Common myeloid progenitor, CD34-positive (primary cell): ENCODE measurements at regions of chr18 and their contacts with region 1.

Region 1: DNA sequence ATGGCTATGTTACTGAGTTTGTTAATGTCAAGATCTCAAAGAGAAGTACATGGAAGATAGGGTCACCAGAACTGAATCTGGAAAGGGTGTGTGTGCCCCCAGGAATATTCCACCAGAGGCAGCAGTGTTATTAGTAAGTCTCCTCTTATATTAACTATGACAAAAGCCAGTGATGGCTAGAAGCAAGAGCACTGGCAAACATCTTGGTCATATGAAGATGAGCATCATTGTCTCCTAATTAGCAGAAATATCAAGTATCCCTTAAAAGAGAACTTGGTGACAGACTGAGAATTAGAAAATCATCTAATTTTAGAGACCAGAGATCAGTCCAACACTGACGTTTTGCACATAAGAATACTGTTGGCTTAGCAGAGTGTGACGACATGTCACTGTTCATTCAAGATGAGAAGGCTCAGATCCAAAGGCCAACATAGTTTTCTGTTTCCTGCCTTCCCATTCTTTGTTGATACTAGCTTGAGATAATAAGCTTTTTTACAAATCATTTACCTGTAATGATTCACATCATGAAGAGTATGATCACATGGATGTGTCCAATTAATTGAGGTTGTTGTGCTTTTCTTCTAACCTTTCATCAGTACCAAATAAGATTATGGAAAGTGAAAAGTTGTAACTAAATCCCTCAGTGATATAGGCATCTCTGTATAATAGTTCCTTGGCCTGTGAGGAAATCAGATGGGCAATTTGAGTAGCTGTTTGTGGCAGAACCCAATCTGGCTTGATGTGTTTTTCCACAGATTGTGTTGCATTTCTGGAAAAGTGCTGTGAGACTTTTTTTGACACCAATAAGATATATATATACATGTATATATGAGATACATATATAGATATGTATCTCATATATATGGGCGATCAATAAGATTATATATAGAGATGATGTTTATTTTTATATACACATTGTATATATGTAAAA is 44.5 kb downstream of the MAPRE2 start:
- DNase-seq: no peak
- H3K4me3 ChIP-seq: no peak overlapping the region
- H3K27ac ChIP-seq: no peak overlapping the region
- H3K4me1 ChIP-seq: peaks cover 0 to 14% (median 4%) of the 10 kb centered on the region in 4 experiments
- H3K27me3 ChIP-seq: no peaks in the 10 kb centered on the region

Region 2: DNA sequence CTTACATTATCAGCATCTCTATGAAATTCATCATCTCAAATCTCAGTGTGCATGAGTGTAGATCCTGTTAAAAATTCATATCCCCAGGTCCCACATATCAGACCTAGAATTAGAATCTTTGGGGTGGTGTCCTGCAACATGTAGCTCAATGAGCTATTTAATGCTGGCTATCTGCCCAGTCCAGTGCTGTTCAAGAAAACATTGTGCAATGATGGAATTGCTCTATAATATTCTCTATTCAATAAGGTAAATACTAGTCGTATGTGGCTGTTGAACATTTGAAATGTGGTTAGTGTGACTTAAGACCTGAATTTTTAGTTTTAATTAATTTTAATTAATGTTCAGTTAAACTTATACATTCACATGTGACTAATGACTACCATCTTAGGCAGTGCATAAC is 988.4 kb before region 1 on chr18:
- CTCF ChIA-PET with region 1: no interaction called
- POLR2A ChIA-PET with region 1: no interaction called
- DNase-seq: no peak
- H3K4me3 ChIP-seq: no peak overlapping the region
- H3K27ac ChIP-seq: no peak overlapping the region
- H3K4me1 ChIP-seq: no peaks in the 10 kb centered on the region
- H3K27me3 ChIP-seq: peaks cover 0 to 2% (median 0%) of the 10 kb centered on the region in 5 experiments

Region 3: GRCh38 chr18:34890486-34891085 is 195.1 kb before region 1 on chr18:
- CTCF ChIA-PET with region 1: no interaction called
- POLR2A ChIA-PET with region 1: no interaction called
- DNase-seq: no peak
- H3K4me3 ChIP-seq: no peak overlapping the region
- H3K27ac ChIP-seq: no peak overlapping the region
- H3K4me1 ChIP-seq: peaks cover 2 to 10% (median 6%) of the 10 kb centered on the region in 4 experiments
- H3K27me3 ChIP-seq: no peaks in the 10 kb centered on the region

Region 4: DNA sequence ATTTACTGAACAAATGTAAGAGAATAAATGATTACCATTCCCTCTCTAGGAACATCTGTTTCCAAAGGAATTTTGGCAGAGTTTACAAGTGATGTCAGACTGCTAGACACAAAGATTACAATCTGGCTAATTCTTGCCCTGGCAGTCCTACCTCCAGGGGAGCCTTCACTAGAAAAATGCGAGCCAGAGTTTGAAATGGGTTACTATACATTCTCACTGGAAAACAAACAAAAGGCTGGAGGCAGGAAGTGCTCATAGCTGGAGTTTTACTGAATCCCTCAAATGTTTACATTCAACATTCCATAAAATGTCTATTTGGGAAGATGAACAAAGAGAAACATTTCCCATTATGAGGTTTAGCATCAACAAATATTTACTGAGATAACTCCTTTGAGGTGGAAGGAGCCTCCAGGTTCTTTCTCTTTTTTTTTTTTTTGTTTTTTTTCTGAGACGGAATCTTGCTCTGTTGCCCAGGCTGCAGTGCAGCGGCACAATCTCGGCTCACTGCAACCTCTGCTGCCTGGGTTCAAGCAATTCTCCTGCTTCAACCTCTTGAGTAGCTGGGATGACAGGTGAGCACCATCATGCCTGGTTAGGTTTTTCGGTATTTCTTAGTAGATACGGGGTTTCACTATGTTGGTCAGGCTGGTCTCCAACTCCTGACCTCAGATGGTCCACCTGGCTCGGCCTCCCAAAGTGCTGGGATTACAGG is 173.5 kb before region 1 on chr18:
- CTCF ChIA-PET with region 1: no interaction called
- POLR2A ChIA-PET with region 1: no interaction called
- DNase-seq: no peak
- H3K4me3 ChIP-seq: no peak overlapping the region
- H3K27ac ChIP-seq: no peak overlapping the region
- H3K4me1 ChIP-seq: no peaks in the 10 kb centered on the region
- H3K27me3 ChIP-seq: no peaks in the 10 kb centered on the region

Region 5: GRCh38 chr18:35071819-35072247 is 13.9 kb before region 1 on chr18:
- CTCF ChIA-PET with region 1: interaction called, 10 read pairs
- POLR2A ChIA-PET with region 1: interaction called, 3 read pairs
- DNase-seq: no peak
- H3K4me3 ChIP-seq: no peak overlapping the region
- H3K27ac ChIP-seq: peak overlapping the region in 1 of 2 experiments; percentile 44
- H3K4me1 ChIP-seq: peaks cover 8 to 34% (median 20%) of the 10 kb centered on the region in 4 experiments
- H3K27me3 ChIP-seq: no peaks in the 10 kb centered on the region

Region 6: GRCh38 chr18:35095983-35096676 is 10.4 kb after region 1 on chr18:
- CTCF ChIA-PET with region 1: interaction called, 10 read pairs
- POLR2A ChIA-PET with region 1: no interaction called
- DNase-seq: peak in 2 of 3 donors; percentile 35 to 39
- H3K4me3 ChIP-seq: no peak overlapping the region
- H3K27ac ChIP-seq: peak overlapping the region in 1 of 2 experiments; percentile 3
- H3K4me1 ChIP-seq: no peaks in the 10 kb centered on the region
- H3K27me3 ChIP-seq: no peaks in the 10 kb centered on the region

Region 7: DNA sequence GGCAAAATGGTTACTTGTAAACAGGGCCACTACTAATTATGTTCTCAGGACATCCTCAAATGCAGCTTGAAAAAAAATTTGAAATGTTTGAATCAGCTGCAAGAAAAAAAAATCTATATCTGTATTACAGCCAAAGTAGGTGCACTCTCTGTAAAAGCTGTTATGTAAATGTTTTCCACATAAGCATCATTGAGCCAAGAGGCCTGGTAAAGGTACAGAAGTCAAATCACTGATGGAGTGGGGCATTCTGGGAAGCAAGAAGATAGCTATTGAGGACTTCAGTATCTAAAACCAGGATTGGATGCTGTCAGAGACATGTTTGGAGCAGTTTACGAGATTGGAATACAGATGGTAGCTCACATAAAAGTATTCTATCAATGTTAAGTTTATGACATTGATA is 35.8 kb after region 1 on chr18:
- CTCF ChIA-PET with region 1: no interaction called
- POLR2A ChIA-PET with region 1: no interaction called
- DNase-seq: no peak
- H3K4me3 ChIP-seq: no peak overlapping the region
- H3K27ac ChIP-seq: peak overlapping the region in 1 of 2 experiments; percentile 30
- H3K4me1 ChIP-seq: peaks cover 0 to 48% (median 26%) of the 10 kb centered on the region in 4 experiments
- H3K27me3 ChIP-seq: no peaks in the 10 kb centered on the region